Left ventricle myocardium superior (tissue), 1 donor: ENCODE measurements at regions of chr2 and their contacts with region 1.

Region 1: GRCh38 chr2:187442378-187442777 is 5.7 kb downstream of the CALCRL start:
- DNase-seq: no peak
- ATAC-seq: no peak

Region 2: DNA sequence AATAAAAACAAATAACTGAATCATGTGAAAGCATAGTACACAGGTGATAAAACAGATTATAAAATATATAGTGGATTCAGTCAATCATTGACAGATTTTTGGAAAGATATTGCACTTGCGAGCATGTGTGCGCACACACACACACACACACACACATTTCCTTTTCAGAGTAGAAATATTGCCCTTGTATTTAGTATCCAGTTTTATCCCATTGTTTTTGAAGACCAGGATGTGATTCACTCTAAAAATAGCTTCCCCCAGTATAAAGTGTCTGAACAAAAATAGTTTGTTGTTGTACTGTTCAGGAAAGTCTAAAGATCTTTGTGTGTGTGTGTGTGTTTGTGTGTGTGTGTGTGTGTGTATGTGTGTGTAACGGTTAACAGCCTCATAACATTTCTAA is 139.8 kb before region 1 on chr2:
- intact Hi-C with region 1: loop called (anchors 10 kb)
- DNase-seq: no peak
- ATAC-seq: peak; percentile 63

Region 3: DNA sequence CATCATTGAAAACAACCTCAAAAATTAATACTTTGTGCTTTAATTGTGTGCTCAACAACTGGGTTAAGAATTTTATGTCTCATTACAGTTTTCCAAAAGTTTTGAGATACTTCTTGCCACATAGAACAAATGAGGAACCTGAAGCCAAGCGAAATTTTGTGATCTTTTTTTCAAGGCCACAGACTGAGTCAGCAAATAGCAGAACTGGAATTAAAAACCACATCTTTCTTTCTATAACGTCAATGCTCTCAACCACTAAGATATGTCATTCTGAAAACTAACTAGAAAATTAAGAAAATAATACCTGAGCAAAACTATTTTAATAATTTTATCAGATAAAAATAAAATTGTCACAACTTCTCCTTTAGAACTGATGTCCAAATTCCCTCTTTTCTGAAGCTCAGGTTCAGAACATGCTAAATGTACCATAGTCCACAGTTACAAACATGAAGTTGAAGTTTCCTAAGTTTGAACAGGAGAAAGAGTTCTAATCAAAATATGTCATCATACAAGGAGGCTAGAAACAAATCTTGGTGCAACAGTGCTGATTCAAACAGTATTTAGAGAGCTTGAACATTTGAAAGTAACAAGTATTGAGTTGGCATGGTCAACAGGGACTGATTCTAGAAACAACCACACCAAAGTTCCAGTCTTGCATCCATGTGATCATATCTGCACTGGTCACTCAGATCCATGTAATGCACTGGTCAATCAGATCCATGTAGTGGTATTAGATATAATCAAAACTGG is 33.3 kb after region 1 on chr2:
- intact Hi-C with region 1: no loop called
- DNase-seq: no peak
- ATAC-seq: no peak

Region 4: DNA sequence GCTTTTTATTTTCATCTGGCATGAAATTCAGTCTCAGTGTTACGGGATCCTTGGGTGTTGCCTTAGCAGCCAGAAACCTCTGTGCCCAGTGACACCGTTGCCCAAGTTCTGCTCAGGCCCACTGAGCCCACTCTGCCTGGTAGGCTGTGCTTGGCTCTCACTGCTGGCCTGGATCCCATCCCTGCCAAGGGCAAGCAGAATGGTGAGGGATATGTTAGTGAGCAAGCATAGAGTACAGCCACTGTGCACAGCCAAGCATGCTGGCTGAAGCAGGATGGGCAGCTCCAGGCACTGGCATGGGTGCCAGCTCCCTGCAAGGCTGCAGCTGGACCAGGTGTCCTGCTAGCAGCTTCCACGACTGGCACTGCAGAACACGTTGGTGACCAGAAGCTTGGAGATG is 306.6 kb after region 1 on chr2:
- intact Hi-C with region 1: no loop called
- DNase-seq: no peak
- ATAC-seq: no peak

Region 5: GRCh38 chr2:188695953-188696352 is 1253.6 kb after region 1 on chr2:
- intact Hi-C with region 1: no loop called
- DNase-seq: no peak
- ATAC-seq: no peak